ENCODE measurements at regions of chr11 and their contacts with region 1.

Region 1: DNA sequence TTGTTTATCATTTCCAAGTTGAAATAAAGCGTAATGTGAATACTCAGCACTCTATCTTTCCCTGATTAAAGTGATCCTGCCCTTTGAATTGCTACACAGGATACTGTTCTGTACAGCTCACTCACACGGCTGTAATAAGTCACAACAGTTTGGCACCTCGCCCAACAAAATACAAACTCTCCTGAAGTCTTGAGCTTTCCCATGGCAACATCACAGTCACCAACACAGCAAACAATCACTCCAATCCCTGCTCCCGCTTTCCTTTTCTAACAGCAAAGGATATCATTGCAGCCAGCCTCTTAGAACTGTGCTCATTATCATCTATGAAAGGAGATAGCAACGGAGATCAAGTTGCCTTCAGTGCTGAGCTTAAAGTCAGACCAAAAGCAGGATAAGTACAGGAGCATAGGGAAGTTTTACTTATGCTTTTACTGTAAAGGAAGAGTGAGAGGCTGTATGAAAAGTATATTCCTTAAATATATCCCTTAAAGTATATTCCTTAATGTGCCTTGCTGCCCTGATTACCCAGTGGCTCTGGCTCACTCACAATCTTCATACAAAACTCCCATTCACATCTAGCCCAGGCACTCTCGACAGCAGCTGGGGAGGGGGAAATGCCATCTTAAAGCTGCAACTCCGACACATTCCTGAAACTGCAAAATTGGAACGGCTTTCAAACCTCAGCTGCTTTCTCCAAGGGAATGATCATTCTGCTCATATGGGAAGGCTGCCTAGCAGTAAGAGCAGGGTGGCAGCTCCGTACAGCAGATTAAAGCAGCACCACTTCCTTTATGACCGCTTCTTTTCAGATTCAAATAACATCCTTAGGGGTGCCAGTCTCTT is 35.8 kb downstream of the MAML2 start:
- DNase-seq: peak in 7 of 9 donors; percentile 16 to 42 (median 28)
- ATAC-seq: peak; percentile 72
- H3K4me3 ChIP-seq: no peak overlapping the region
- H3K4me3 Mint-ChIP-seq: peak overlapping the region; percentile 62 to 91 (median 80)
- H3K27ac ChIP-seq: peak overlapping the region; percentile 56
- H3K27ac Mint-ChIP-seq: peak overlapping the region; percentile 19 to 91 (median 86)
- H3K4me1 ChIP-seq: peaks cover 3 to 32% of the 10 kb centered on the region in 2 donors
- H3K4me1 Mint-ChIP-seq: peaks cover 28 to 99% (median 91%) of the 10 kb centered on the region in 7 donors
- H3K27me3 ChIP-seq: no peaks in the 10 kb centered on the region
- H3K27me3 Mint-ChIP-seq: no peaks in the 10 kb centered on the region

Region 2: GRCh38 chr11:96188243-96189006 is 118.7 kb before region 1 on chr11:
- CTCF ChIA-PET with region 1: no interaction called
- POLR2A ChIA-PET with region 1: no interaction called
- intact Hi-C with region 1: loop called in 1 of 2 experiments (anchors 1 kb)
- DNase-seq: peak in 2 of 9 donors; percentile 17 to 57
- ATAC-seq: peak; percentile 38
- H3K4me3 ChIP-seq: no peak overlapping the region
- H3K4me3 Mint-ChIP-seq: peak overlapping the region; percentile 42 to 79 (median 72)
- H3K27ac ChIP-seq: peak overlapping the region; percentile 15
- H3K27ac Mint-ChIP-seq: peak overlapping the region; percentile 21 to 90 (median 79)
- H3K4me1 ChIP-seq: peaks cover 9 to 50% of the 10 kb centered on the region in 2 donors
- H3K4me1 Mint-ChIP-seq: peaks cover 35 to 92% (median 88%) of the 10 kb centered on the region in 7 donors
- H3K27me3 ChIP-seq: no peaks in the 10 kb centered on the region
- H3K27me3 Mint-ChIP-seq: no peaks in the 10 kb centered on the region

Region 3: GRCh38 chr11:96279018-96279895 is 27.9 kb before region 1 on chr11:
- CTCF ChIA-PET with region 1: no interaction called
- POLR2A ChIA-PET with region 1: interaction called, 3 read pairs
- intact Hi-C with region 1: loop called in 1 of 2 experiments (anchors 2 kb)
- DNase-seq: no peak
- ATAC-seq: peak; percentile 54
- H3K4me3 ChIP-seq: no peak overlapping the region
- H3K4me3 Mint-ChIP-seq: peak overlapping the region in 9 of 10 donors; percentile 31 to 71 (median 51)
- H3K27ac ChIP-seq: peak overlapping the region; percentile 50
- H3K27ac Mint-ChIP-seq: peak overlapping the region in 8 of 9 donors; percentile 37 to 86 (median 79)
- H3K4me1 ChIP-seq: peaks cover 0 to 61% of the 10 kb centered on the region in 2 donors
- H3K4me1 Mint-ChIP-seq: peaks cover 33 to 87% (median 81%) of the 10 kb centered on the region in 7 donors
- H3K27me3 ChIP-seq: no peaks in the 10 kb centered on the region
- H3K27me3 Mint-ChIP-seq: no peaks in the 10 kb centered on the region

Region 4: GRCh38 chr11:96293598-96294021 is 13.5 kb before region 1 on chr11:
- CTCF ChIA-PET with region 1: no interaction called
- POLR2A ChIA-PET with region 1: interaction called, 4 read pairs
- intact Hi-C with region 1: loop called in 1 of 2 experiments (anchors 1 kb)
- DNase-seq: peak in 1 of 9 donors; percentile 4
- ATAC-seq: peak; percentile 66
- H3K4me3 ChIP-seq: no peak overlapping the region
- H3K4me3 Mint-ChIP-seq: peak overlapping the region in 9 of 10 donors; percentile 45 to 87 (median 65)
- H3K27ac ChIP-seq: no peak overlapping the region
- H3K27ac Mint-ChIP-seq: peak overlapping the region in 8 of 9 donors; percentile 16 to 93 (median 43)
- H3K4me1 ChIP-seq: peaks cover 8 to 39% of the 10 kb centered on the region in 2 donors
- H3K4me1 Mint-ChIP-seq: peaks cover 50 to 96% (median 89%) of the 10 kb centered on the region in 7 donors
- H3K27me3 ChIP-seq: no peaks in the 10 kb centered on the region
- H3K27me3 Mint-ChIP-seq: no peaks in the 10 kb centered on the region